B cell (primary cell): ENCODE measurements at regions of chr7 and their contacts with region 1.

Region 1: GRCh38 chr7:23685731-23686130 is 5.7 kb downstream of the FAM221A start:
- DNase-seq: no peak
- ATAC-seq: no peak
- H3K4me3 ChIP-seq: no peak overlapping the region
- H3K4me3 Mint-ChIP-seq: no peak overlapping the region
- H3K27ac ChIP-seq: no peak overlapping the region
- H3K27ac Mint-ChIP-seq: no peak overlapping the region
- H3K4me1 ChIP-seq: peaks cover 0 to 5% of the 10 kb centered on the region in 2 donors
- H3K4me1 Mint-ChIP-seq: peaks cover 10% of the 10 kb centered on the region
- H3K27me3 ChIP-seq: no peaks in the 10 kb centered on the region
- H3K27me3 Mint-ChIP-seq: no peaks in the 10 kb centered on the region
- CTCF ChIP-seq: no peak

Region 2: GRCh38 chr7:23205909-23206767 is 479.6 kb before region 1 on chr7:
- CTCF ChIA-PET with region 1: no interaction called
- POLR2A ChIA-PET with region 1: no interaction called
- intact Hi-C with region 1: no loop called
- DNase-seq: peak; percentile 21
- ATAC-seq: no peak
- H3K4me3 ChIP-seq: peak overlapping the region in 3 of 5 experiments; percentile 24 to 30 (median 28)
- H3K4me3 Mint-ChIP-seq: peak overlapping the region; percentile 60
- H3K27ac ChIP-seq: no peak overlapping the region
- H3K27ac Mint-ChIP-seq: no peak overlapping the region
- H3K4me1 ChIP-seq: no peaks in the 10 kb centered on the region
- H3K4me1 Mint-ChIP-seq: peaks cover 5% of the 10 kb centered on the region
- H3K27me3 ChIP-seq: peaks cover 0 to 3% (median 0%) of the 10 kb centered on the region in 4 experiments
- H3K27me3 Mint-ChIP-seq: peaks cover 15% of the 10 kb centered on the region
- CTCF ChIP-seq: no peak

Region 3: DNA sequence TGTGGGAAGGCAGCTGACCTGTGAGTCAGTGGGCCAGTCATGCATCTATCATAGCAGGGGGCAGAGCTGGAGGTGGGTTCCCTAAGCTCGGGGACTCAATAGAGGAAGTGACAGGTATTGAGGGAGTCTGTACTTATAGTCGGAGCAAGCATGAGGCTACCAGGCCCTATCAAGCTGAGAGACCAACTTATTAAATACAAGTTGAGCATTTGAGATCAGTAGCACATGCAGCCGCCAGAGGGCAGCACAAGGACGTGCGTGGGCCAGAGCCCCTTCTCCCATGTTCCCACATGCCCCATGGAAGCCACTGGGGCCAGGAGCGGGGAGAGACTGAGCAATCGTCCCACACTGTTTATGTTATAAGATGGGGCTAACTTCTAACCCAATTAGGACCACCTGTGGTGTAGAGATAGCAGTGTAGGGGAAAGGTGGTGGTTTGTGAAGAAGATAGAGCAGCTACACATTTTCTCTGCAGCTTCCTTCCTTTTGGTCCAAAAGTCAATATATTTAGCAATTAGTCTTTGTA is 11.2 kb after region 1 on chr7:
- CTCF ChIA-PET with region 1: interaction called, 21 read pairs
- POLR2A ChIA-PET with region 1: no interaction called
- intact Hi-C with region 1: no loop called
- DNase-seq: peak; percentile 67
- ATAC-seq: peak; percentile 45
- H3K4me3 ChIP-seq: no peak overlapping the region
- H3K4me3 Mint-ChIP-seq: no peak overlapping the region
- H3K27ac ChIP-seq: no peak overlapping the region
- H3K27ac Mint-ChIP-seq: no peak overlapping the region
- H3K4me1 ChIP-seq: no peaks in the 10 kb centered on the region
- H3K4me1 Mint-ChIP-seq: peaks cover 2% of the 10 kb centered on the region
- H3K27me3 ChIP-seq: no peaks in the 10 kb centered on the region
- H3K27me3 Mint-ChIP-seq: no peaks in the 10 kb centered on the region
- CTCF ChIP-seq: peak; percentile 85